ENCODE measurements at regions of chr9 and their contacts with region 1.

Region 1: DNA sequence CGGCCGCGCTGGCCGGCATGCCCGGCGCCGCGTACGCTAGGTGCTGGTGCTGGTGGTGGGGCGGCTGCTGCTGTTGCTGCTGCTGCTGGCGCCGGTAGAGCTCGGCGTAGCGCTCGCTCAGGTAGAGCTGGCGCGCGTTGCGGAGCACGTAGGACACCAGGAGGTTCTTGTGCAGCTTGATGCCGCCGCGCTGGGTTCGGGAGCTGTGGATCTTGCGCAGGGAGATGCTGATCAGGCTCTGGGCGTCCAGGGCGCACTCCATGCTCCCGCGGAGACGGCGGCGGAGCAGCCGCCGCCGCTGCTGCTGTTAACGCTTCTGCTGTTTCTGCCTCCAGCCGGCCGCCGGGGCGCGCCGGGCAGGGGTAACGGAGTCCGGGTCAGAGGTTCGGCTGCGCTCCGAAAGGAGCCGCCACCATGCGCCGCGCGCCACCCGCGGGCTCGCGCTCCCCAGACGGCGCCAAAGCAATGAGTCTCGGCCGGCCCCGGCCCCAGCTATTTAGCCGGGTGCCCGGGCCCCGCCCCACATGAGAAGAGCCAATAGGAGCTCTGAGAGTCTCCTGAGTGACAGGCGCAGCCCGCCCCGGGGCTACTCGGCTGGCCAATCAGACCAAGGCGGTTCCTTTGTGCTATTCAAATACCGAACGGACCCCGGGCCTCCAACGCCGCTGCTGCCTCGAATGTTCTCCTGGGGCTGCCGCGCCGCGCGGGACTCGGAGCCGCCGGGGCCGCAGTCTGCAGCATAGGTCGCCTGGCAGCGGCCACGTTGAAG is at the start of gene IER5L:
- DNase-seq: peak; percentile 96 to 98 (median 98)
- H3K4me3 ChIP-seq: peak within 1 kb of the TSS; percentile 52
- H3K27ac ChIP-seq: peak within 1 kb of the TSS; percentile 97 to 99
- H3K4me1 ChIP-seq: peaks cover 8% of the 10 kb centered on the region
- H3K27me3 ChIP-seq: no peaks in the 10 kb centered on the region
- CTCF ChIP-seq: peak in 1 of 3 donors; percentile 25
- EP300 ChIP-seq: no peak
- POLR2A ChIP-seq: peak; percentile 95
- total RNA-seq, gene IER5L: 15.4 to 74.3 (median 45.0) TPM

Region 2: GRCh38 chr9:129245276-129245675 is 67.3 kb after region 1 on chr9:
- intact Hi-C with region 1: loop called in 2 of 4 experiments (anchors 5 kb)
- DNase-seq: peak in 2 of 5 donors; percentile 22 to 30
- H3K4me3 ChIP-seq: no peak overlapping the region
- H3K27ac ChIP-seq: no peak overlapping the region
- H3K4me1 ChIP-seq: no peaks in the 10 kb centered on the region
- H3K27me3 ChIP-seq: no peaks in the 10 kb centered on the region
- CTCF ChIP-seq: no peak
- EP300 ChIP-seq: no peak
- POLR2A ChIP-seq: no peak

Region 3: GRCh38 chr9:129320575-129321263 is 142.7 kb after region 1 on chr9:
- intact Hi-C with region 1: loop called (anchors 2 to 5 kb)
- DNase-seq: peak; percentile 62 to 84 (median 64)
- H3K4me3 ChIP-seq: peak overlapping the region; percentile 34
- H3K27ac ChIP-seq: peak overlapping the region; percentile 88 to 94
- H3K4me1 ChIP-seq: peaks cover 35% of the 10 kb centered on the region
- H3K27me3 ChIP-seq: no peaks in the 10 kb centered on the region
- CTCF ChIP-seq: peak in 1 of 3 donors; percentile 26
- EP300 ChIP-seq: no peak
- POLR2A ChIP-seq: no peak

Region 4: GRCh38 chr9:129482521-129483414 is 304.8 kb after region 1 on chr9:
- intact Hi-C with region 1: loop called (anchors 5 kb)
- DNase-seq: peak; percentile 92 to 98 (median 95)
- H3K4me3 ChIP-seq: peak overlapping the region; percentile 51
- H3K27ac ChIP-seq: peak overlapping the region; percentile 92 to 100
- H3K4me1 ChIP-seq: peaks cover 37% of the 10 kb centered on the region
- H3K27me3 ChIP-seq: no peaks in the 10 kb centered on the region
- CTCF ChIP-seq: peak in 1 of 3 donors; percentile 46
- EP300 ChIP-seq: no peak
- POLR2A ChIP-seq: peak; percentile 51

Region 5: GRCh38 chr9:129610473-129611301 is 432.7 kb after region 1 on chr9:
- intact Hi-C with region 1: loop called in 2 of 4 experiments (anchors 1 to 10 kb)
- DNase-seq: peak; percentile 81 to 90 (median 87)
- H3K4me3 ChIP-seq: peak overlapping the region; percentile 57
- H3K27ac ChIP-seq: peak overlapping the region; percentile 56 to 89
- H3K4me1 ChIP-seq: peaks cover 16% of the 10 kb centered on the region
- H3K27me3 ChIP-seq: no peaks in the 10 kb centered on the region
- CTCF ChIP-seq: peak; percentile 84 to 100 (median 100)
- EP300 ChIP-seq: no peak
- POLR2A ChIP-seq: peak; percentile 47